Activated naive CD8-positive, alpha-beta T cell treated with anti-CD3 and anti-CD28 coated beads, Interleukin-2, amount 10 ng/mL, durations not matched to agents 7 days and 5 days (primary cell): ENCODE measurements at regions of chr19 and their contacts with region 1.

Region 1: GRCh38 chr19:54969647-54970046 is 3.5 kb downstream of the NLRP2 start:
- DNase-seq: no peak
- ATAC-seq: no peak
- H3K4me3 Mint-ChIP-seq: no peak overlapping the region
- H3K27ac Mint-ChIP-seq: no peak overlapping the region
- H3K4me1 Mint-ChIP-seq: peaks cover 20% of the 10 kb centered on the region
- H3K27me3 Mint-ChIP-seq: no peaks in the 10 kb centered on the region

Region 2: DNA sequence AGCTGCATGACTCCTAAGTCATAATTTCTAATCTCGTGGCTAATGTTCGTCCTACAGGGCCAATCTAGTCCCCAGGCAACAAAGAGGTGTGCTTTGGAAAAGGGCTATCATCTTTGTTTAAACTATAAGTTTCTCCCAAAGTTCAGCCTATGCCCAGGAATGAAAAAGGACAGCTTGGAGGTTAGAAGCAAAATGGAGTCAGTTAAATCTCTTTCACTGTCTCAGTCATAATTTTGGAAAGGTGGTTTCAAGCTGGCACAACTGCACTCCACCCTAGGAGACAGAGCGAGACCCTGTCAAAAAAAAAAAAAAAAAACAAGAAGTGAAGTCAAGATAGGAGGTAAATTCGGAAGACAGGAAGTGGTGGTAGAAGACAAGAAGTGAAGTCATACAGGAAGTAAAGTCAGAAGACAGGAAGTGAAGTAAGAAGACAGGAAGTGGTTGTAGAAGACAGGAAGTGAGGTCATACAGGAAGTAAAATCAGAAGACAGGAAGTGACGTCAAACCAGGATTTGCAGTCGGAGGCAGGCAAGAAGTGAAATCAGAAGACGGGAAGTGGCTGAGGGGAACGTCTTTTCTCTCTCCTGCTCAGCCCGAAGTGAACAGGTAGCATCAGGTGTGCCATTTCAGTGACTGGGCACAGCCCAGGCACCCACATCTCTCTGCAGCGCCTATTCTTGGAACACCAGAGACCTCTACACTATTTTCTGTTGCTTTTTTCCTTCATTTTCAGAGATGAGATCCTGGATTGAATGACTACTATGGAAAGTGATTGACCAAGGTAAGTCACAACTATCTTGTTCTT is 36.2 kb after region 1 on chr19:
- POLR2A ChIA-PET with region 1: interaction called, 11 read pairs
- DNase-seq: peak; percentile 56
- ATAC-seq: peak; percentile 90
- H3K4me3 Mint-ChIP-seq: peak overlapping the region; percentile 79
- H3K27ac Mint-ChIP-seq: peak overlapping the region; percentile 87
- H3K4me1 Mint-ChIP-seq: peaks cover 31% of the 10 kb centered on the region
- H3K27me3 Mint-ChIP-seq: peaks cover 4% of the 10 kb centered on the region

Region 3: DNA sequence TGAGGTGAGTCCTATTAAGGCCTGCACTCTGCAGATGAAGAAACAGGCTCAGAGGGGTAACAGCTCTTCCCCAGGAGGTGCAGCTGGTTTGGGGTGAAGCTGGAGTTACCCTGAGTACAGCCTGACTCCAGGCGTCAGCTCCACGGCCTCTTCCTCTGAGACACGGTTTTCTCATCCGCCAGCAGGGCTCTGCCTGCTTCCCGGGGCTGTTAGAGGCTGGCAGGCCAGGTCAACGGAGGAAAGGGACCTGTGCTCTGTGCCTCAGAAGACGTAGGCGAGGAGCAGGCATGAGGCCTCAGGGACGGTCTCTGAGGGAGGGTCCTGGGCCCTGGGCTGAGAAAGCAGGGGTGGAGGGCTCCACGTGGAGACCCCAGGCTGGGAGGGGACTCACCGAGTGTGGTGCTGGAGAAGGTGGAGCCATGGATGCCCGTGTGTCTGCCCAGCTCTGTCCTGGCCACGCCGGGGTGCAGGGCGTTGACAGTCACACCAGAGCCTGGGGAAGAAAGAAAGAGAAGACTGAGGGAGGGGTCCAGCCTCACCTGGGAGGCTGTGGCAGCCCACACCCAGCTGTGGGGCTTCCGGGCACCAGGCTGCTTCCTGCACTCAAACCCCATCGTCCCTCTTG is 77.5 kb after region 1 on chr19:
- POLR2A ChIA-PET with region 1: no interaction called
- DNase-seq: no peak
- ATAC-seq: no peak
- H3K4me3 Mint-ChIP-seq: no peak overlapping the region
- H3K27ac Mint-ChIP-seq: no peak overlapping the region
- H3K4me1 Mint-ChIP-seq: peaks cover 14% of the 10 kb centered on the region
- H3K27me3 Mint-ChIP-seq: no peaks in the 10 kb centered on the region